Posterior vena cava (tissue), 2 donors: ENCODE measurements at regions of chrX and their contacts with region 1.

Region 1: DNA sequence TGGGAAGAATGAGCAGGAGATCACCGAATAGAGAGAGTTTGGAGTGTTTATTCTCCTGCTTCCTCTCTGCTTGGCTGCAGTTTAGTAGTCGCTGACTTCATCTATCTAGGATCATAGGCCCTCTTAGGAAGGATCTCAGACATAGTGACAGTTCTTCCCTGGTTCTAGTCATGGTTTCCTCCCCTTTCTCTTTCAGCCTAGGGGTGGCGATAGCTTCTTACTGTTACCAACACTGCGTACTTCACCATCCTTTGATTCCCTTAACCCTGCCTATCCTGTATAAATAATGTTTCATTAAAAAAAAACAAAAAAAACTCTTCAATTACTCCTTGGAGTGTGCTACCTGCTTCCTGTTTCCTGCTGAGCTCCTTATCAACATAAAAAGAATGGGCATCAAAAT is 103.8 kb downstream of the DDX53 start:
- DNase-seq: no peak

Region 2: GRCh38 chrX:21658152-21658737 is 1445.3 kb before region 1 on chrX and contains the start of gene KLHL34:
- intact Hi-C with region 1: no loop called
- DNase-seq: no peak
- total RNA-seq, gene KLHL34: not detected

Region 3: DNA sequence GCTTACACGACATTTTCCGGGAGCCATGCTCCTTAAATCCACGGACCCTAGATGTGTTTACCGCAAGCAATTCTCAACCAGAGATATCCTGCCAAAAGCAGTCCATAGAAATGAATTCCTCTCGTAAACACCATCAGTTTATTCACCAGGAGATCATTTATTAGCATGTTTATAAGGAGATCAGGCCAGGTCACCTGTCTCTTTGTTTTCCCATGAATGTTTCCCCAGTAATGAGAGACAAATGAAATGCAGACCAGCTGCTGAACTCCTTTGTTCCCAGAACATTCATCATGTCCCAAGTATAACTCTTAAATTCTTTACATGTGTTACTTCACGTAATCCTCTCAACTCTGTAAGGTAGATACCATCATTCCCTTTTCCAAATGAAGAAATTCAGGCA is 33.3 kb after region 1 on chrX:
- intact Hi-C with region 1: loop called in 1 of 2 experiments (anchors 2 kb)
- DNase-seq: no peak